ENCODE measurements at regions of chr11 and their contacts with region 1.

Region 1: DNA sequence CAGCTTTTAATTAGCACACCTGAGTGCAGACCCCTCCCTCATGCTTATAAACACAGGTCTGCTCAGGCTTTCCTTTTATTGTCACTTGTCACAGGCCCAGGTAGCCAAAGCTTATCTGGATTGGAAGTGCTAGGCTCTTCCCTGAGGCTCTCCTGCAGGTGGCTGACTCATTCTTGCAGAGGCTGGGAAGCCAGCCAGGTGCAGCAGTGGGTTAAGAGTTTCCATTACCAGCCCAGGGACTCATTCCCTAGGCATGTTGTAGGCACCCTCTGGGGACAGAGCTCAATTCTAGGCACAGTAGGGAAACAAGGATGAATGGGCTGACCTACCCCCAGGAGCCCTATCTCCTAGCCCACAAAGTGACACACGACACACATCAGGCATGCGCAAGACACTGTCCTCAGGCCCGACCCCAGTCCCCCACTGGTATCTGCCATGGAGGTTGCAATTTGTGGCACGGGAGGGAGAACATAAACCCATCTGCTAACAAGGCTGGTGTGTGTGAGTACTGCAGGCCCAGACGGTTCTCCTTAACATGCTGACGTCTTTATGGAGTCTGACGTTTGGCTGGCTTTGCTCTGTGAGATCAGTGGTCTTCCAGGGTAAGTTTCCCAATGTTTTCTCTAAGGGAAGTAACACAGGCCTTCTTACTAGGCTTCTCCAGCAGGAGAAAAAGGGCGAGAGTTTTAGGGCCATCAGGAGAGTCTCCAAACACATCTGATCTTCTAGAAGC is 94.2 kb downstream of the ABTB2 start:
- DNase-seq: peak; percentile 62 to 69
- ATAC-seq: peak; percentile 82 to 83
- H3K4me3 ChIP-seq: no peak overlapping the region
- H3K27ac ChIP-seq: peak overlapping the region; percentile 32 to 80; a peak in 5 of 6 replicates
- H3K4me1 ChIP-seq: peaks cover 68% of the 10 kb centered on the region
- CTCF ChIP-seq: no peak
- EP300 ChIP-seq: no peak
- POLR2A ChIP-seq: no peak
- RAD21 ChIP-seq: no peak

Region 2: DNA sequence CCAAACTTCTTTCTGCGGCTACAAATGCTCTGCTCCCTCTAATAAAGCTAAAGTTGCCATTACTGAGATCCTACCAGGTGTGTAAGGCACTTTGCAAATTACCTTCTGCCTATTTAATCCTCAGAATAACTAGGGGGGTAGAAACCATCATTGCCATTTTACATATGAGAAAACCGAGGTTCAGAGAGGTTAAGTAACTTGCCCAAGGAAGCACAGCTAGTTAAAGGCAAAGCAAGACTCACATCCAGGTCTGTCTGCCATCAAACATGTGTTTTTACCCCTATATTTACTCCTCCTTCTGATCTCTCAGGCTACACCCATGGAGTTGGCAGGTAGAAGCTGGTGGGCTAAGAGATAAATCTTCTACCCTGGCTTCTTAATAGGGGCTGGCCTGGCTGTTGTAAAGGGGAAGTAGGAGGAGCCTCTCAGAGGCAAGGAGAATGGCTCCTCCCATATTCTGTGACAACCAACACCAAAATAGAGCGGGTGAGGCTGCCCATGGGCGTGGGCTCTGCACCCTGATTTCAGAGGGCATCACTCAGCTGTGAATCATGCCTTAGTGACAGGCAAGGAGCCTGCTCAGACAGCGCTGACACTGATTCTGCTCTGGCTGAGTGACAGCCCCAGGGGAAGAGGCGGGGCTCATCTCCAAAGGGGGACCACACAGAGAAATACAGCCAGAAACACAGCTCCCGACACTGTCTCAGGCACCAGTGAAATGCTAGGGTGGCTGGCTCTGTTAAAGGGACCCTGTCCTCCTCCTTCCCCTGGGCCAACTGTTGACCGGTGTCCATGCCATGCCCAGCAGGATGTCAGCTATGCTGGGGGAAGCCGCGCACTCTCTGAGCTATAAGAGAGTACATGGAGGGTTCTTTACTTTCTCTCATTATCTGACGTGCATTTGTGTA is 12.6 kb before region 1 on chr11:
- CTCF ChIA-PET with region 1: interaction called, 11 read pairs
- POLR2A ChIA-PET with region 1: interaction called, 3 read pairs
- DNase-seq: peak; percentile 69 to 71
- ATAC-seq: peak; percentile 86 to 87
- H3K4me3 ChIP-seq: no peak overlapping the region
- H3K27ac ChIP-seq: peak overlapping the region in 1 of 2 experiments; percentile 39; a peak in 3 of 6 replicates
- H3K4me1 ChIP-seq: peaks cover 63% of the 10 kb centered on the region
- CTCF ChIP-seq: no peak
- EP300 ChIP-seq: no peak
- POLR2A ChIP-seq: no peak
- RAD21 ChIP-seq: no peak; a peak in 1 of 5 replicates

Measured in A549 (cell line).